AG04450 (cell line): ENCODE measurements at regions of chr10 and their contacts with region 1.

Region 1: DNA sequence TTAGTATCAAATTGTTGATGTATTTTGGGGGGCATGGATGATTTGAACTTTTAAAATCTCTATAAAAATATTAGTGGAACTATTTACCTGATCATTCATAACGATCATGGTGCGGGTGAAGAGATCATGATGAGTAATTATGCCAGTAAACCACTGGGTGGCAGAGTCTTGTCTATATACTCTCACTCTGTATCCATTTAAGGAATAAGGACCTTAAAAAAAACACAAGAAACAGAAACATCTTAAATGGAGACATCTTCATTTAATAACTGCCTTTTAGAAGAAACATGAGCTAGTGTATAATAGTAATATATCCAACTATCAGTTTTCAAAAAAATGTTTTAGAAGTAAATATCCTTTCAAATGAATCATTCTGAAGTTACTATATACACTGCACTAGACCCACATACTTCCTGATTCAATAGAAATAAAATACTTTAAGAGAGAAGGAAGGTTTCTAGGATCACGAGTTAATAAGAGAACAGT is 84.0 kb downstream of the NRBF2 start:
- DNase-seq: no peak
- H3K4me3 ChIP-seq: no peak overlapping the region
- H3K27ac ChIP-seq: no peak overlapping the region
- H3K27me3 ChIP-seq: no peaks in the 10 kb centered on the region
- CTCF ChIP-seq: peak; percentile 66

Region 2: DNA sequence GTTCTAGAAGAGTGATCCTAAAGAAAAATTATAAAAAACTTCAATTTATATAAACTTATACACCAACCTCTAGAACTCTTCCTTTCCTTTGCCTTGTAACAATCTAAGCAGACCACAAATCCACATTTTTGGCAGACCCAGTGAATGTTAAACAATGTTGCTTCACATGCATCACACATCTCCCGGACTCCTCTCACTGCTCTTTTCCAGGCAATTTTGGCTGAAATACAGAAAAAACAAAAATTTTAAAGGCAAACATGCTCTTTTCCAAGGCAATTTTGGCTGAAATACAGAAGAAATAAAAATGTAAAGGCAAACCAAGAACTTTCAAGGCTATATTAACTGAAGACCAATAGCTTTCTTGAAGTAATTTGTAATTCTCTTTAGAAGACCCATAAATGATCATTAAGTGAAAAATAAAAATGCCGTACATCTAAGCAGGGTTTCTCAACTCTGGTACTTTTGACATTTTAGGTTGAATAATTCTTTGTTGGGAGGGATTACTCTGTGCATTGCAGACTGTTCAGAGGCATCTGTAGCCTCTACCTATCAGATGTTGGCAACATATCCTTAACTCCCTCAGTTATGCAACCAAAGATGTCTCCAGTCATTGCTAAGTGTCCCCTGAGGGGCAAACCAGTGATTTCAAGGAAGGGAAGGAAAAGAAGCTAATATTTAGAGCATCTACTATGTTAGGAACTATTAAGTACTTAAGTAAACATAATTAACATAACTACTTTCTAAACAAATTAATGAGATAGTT is 19.6 kb before region 1 on chr10:
- CTCF ChIA-PET with region 1: interaction called, 10 read pairs
- POLR2A ChIA-PET with region 1: no interaction called
- DNase-seq: peak; percentile 80
- H3K4me3 ChIP-seq: no peak overlapping the region
- H3K27ac ChIP-seq: no peak overlapping the region
- H3K27me3 ChIP-seq: no peaks in the 10 kb centered on the region
- CTCF ChIP-seq: no peak

Region 3: GRCh38 chr10:63256009-63256773 is 39.0 kb after region 1 on chr10:
- CTCF ChIA-PET with region 1: interaction called, 13 read pairs
- POLR2A ChIA-PET with region 1: no interaction called
- DNase-seq: no peak
- H3K4me3 ChIP-seq: no peak overlapping the region
- H3K27ac ChIP-seq: no peak overlapping the region
- H3K27me3 ChIP-seq: no peaks in the 10 kb centered on the region
- CTCF ChIP-seq: no peak

Region 4: DNA sequence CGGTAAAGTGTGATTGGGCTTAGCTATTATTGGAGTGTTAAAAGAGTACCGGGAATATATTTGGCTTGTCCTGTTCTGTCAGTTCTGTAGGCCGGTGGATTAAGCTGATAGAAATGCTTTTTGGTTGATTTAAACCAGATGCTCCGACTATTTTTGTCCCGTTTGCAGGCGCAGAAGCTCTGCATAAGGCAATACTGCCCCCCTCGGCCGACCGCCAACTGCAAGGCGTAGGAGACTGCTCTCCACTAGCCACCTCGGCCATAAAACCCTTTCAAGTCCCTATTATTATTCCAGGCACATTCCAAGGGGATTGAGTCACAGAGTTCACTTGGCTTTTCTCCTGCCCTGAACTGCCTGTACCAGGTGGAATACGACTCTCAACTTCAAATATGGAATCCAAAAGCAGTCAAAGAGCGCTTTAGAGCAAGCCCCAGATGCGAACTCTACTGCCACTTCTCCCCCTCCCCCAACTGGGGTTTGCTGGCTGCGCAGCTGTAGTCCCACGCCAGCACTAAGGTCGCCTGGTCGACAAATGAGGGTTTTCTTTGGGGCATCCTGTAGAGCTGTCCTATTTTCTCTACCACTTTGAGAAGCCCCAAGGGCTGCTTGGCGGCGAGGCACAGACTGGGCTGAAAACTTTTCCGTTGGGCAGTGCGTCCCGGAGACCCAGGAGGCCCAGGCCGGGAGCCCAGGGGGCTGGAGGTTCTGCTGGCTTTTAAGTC is 412.4 kb after region 1 on chr10:
- CTCF ChIA-PET with region 1: interaction called, 47 read pairs
- POLR2A ChIA-PET with region 1: no interaction called
- DNase-seq: peak; percentile 95
- H3K4me3 ChIP-seq: peak overlapping the region; percentile 79
- H3K27ac ChIP-seq: peak overlapping the region; percentile 99
- H3K27me3 ChIP-seq: no peaks in the 10 kb centered on the region
- CTCF ChIP-seq: peak; percentile 89

Region 5: DNA sequence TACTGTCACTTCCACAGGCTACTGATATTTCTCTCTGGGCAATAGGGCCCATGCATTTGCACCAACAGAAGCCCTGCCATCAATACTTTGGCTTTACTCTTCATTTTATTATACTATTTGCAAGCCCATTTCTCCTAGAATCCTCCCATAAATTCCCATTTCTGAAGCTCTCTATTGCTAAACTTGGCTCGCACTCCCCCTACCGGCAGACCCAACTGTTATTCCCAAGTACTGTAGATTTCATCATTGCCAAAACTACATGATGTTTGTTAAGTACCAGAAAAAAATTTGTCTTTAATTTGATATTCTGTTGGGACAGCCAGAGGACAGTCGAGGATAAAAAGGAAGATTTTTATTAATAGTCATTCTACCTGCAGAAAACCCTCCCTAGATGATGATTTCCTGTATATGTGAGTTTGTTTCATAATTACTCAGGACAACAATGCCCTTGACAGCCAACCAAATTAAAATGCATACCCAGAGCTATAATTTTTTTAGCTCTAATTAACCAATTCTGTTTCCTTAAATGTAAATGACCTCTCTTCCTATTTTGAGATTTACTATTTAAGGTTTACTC is 602.7 kb after region 1 on chr10:
- CTCF ChIA-PET with region 1: no interaction called
- POLR2A ChIA-PET with region 1: no interaction called
- DNase-seq: peak; percentile 18
- H3K4me3 ChIP-seq: no peak overlapping the region
- H3K27ac ChIP-seq: no peak overlapping the region
- H3K27me3 ChIP-seq: no peaks in the 10 kb centered on the region
- CTCF ChIP-seq: peak; percentile 92